Transverse colon (tissue), 4 donors: ENCODE measurements at regions of chr16 and their contacts with region 1.

Region 1: GRCh38 chr16:81283044-81283443 is 31.7 kb upstream of the GAN start:
- DNase-seq: no peak
- H3K4me3 ChIP-seq: no peak overlapping the region
- H3K27ac ChIP-seq: no peak overlapping the region
- H3K4me1 ChIP-seq: peaks cover 0 to 3% (median 1%) of the 10 kb centered on the region in 4 donors
- H3K27me3 ChIP-seq: no peaks in the 10 kb centered on the region
- CTCF ChIP-seq: no peak
- EP300 ChIP-seq: no peak
- POLR2A ChIP-seq: no peak

Region 2: DNA sequence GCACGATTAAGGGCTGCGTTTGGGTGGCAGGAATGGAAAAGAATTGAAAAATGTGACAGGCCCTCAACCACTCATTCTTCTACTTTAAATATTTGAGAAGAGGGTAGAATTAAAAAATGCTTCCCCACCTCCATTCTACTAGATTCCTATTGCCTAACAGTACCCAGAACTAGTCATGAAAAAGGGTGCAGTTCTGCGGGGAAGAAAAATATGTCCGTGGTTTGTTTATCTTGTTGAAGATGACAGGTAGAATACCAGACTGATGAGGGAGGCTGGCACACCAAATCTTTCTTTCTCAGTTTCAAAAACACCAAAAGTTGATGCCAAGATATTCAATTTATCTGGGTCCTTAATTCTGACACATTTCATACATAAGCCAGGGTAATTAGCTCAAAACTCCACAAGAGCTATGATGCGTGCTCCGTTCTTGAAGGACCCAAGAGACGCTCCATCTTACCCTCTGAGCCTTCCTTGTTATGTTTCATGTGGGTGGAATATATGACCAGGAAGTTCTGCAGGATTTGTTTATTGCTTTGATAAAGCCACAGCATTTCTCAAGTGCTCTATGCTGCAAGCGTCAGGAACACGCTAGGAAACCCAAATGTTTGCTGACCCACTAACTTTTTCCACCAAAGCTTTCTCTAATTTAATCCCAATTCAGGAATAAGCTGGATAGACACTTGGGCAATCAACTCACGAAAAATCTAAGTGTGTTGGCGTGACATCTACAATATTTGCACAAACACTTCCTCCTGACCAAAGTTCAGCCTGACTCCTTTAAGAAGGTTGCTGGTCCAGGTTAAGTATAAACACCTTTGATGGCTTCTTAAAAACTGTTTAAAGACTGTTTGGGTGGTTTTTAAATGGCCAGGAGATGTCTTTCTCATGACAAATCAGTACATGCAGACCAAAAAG is 11.1 kb after region 1 on chr16:
- in situ Hi-C with region 1: no loop called
- intact Hi-C with region 1: loop called (anchors 1 kb)
- DNase-seq: no peak
- H3K4me3 ChIP-seq: no peak overlapping the region
- H3K27ac ChIP-seq: peak overlapping the region; percentile 72 to 79 (median 74)
- H3K4me1 ChIP-seq: peaks cover 5 to 21% (median 14%) of the 10 kb centered on the region in 4 donors
- H3K27me3 ChIP-seq: no peaks in the 10 kb centered on the region
- CTCF ChIP-seq: no peak
- EP300 ChIP-seq: no peak
- POLR2A ChIP-seq: peak; percentile 22